ENCODE measurements at regions of chr6 and their contacts with region 1.

Region 1: GRCh38 chr6:31971993-31972708 is at the start of gene DXO:
- DNase-seq: peak; percentile 98
- H3K4me3 Mint-ChIP-seq: peak within 1 kb of the TSS; percentile 97
- H3K27ac Mint-ChIP-seq: peak within 1 kb of the TSS; percentile 99
- H3K4me1 Mint-ChIP-seq: peaks cover 45% of the 10 kb centered on the region
- H3K27me3 Mint-ChIP-seq: no peaks in the 10 kb centered on the region
- total RNA-seq, gene DXO: 16.7 to 17.5 TPM

Region 2: GRCh38 chr6:31862344-31863227 is 109.6 kb before region 1 on chr6 and contains the start of gene NEU1:
- CTCF ChIA-PET with region 1: interaction called, 10 read pairs
- POLR2A ChIA-PET with region 1: interaction called, 9 read pairs
- DNase-seq: peak; percentile 100
- H3K4me3 Mint-ChIP-seq: peak within 1 kb of the TSS; percentile 89
- H3K27ac Mint-ChIP-seq: peak within 1 kb of the TSS; percentile 66
- H3K4me1 Mint-ChIP-seq: peaks cover 23% of the 10 kb centered on the region
- H3K27me3 Mint-ChIP-seq: no peaks in the 10 kb centered on the region
- total RNA-seq, gene NEU1: 29.2 to 29.6 TPM

Region 3: GRCh38 chr6:31897612-31898382 is 74.4 kb before region 1 on chr6 and contains the start of gene EHMT2:
- CTCF ChIA-PET with region 1: interaction called, 3 read pairs
- POLR2A ChIA-PET with region 1: interaction called, 22 read pairs
- DNase-seq: peak; percentile 91
- H3K4me3 Mint-ChIP-seq: peak within 1 kb of the TSS; percentile 90
- H3K27ac Mint-ChIP-seq: peak within 1 kb of the TSS; percentile 84
- H3K4me1 Mint-ChIP-seq: peaks cover 49% of the 10 kb centered on the region
- H3K27me3 Mint-ChIP-seq: peaks cover 5% of the 10 kb centered on the region
- total RNA-seq, gene EHMT2: 57.0 to 58.4 TPM

Region 4: DNA sequence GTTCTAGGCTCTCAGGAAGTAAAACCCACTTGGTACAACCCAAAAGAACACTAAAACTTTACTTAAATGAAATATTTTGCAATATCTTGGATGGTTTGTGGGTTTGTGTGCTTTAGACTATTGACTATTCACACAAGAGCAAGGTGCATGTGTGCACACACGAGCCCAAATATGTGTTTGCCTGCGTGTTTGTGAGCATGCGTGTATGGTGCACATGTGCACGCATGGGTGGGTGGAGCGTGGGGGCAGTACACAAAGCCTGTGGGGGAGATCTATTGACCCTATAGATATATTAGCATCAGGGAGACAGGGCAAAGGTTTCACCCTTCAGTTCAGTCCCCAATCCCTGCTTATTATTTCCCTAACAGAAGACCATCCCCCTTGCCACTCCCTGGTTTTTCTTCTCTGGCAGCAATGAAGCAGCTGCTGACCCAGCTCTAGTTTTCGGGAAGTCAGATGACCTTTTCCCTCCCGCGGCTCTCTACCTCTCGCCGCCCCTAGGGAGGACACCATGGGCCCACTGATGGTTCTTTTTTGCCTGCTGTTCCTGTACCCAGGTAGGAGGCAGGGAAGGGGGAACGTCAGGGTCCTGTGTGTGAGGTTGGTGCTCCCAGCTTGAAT is 44.8 kb before region 1 on chr6 and contains the start of gene C2:
- CTCF ChIA-PET with region 1: no interaction called
- POLR2A ChIA-PET with region 1: no interaction called
- DNase-seq: no peak
- H3K4me3 Mint-ChIP-seq: no peak within 1 kb of the TSS
- H3K27ac Mint-ChIP-seq: no peak within 1 kb of the TSS
- H3K4me1 Mint-ChIP-seq: no peaks in the 10 kb centered on the region
- H3K27me3 Mint-ChIP-seq: peaks cover 3% of the 10 kb centered on the region
- total RNA-seq, gene C2: 0.45 to 1.0 TPM

Region 5: DNA sequence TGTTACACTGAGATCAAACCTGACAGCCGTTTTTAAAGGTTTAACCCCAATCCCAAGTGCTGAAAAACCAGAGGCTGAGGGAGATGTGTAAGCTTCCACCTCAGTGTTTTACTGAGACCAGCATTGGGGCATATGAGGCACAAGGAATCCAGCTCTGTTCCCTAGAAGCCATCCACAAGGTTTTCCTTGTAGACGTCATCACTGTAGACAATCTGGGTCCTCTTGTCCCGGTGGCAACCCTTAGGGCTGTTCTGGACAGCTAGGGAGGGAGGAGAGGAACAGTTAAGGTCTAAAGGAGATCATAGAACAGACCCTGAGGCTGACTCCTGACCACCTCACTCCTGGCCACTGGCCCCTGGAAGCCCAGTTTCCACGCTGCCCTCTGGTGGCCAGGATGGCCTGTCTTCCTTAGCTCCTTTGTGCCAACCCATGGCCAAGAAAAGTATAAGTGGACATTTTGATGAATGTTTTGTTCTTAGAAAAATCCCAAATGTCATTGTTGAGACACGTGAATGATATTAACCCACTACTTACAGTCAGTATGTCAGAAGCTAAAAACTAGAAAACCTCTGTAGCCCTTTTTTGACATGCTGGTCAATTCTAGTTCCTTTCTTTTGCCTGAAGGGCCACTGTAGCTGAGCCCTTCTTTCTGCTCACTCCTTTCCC is 19.9 kb before region 1 on chr6:
- CTCF ChIA-PET with region 1: interaction called, 11 read pairs
- POLR2A ChIA-PET with region 1: interaction called, 162 read pairs
- DNase-seq: peak; percentile 41
- H3K4me3 Mint-ChIP-seq: no peak overlapping the region
- H3K27ac Mint-ChIP-seq: no peak overlapping the region
- H3K4me1 Mint-ChIP-seq: peaks cover 2% of the 10 kb centered on the region
- H3K27me3 Mint-ChIP-seq: no peaks in the 10 kb centered on the region

Region 6: DNA sequence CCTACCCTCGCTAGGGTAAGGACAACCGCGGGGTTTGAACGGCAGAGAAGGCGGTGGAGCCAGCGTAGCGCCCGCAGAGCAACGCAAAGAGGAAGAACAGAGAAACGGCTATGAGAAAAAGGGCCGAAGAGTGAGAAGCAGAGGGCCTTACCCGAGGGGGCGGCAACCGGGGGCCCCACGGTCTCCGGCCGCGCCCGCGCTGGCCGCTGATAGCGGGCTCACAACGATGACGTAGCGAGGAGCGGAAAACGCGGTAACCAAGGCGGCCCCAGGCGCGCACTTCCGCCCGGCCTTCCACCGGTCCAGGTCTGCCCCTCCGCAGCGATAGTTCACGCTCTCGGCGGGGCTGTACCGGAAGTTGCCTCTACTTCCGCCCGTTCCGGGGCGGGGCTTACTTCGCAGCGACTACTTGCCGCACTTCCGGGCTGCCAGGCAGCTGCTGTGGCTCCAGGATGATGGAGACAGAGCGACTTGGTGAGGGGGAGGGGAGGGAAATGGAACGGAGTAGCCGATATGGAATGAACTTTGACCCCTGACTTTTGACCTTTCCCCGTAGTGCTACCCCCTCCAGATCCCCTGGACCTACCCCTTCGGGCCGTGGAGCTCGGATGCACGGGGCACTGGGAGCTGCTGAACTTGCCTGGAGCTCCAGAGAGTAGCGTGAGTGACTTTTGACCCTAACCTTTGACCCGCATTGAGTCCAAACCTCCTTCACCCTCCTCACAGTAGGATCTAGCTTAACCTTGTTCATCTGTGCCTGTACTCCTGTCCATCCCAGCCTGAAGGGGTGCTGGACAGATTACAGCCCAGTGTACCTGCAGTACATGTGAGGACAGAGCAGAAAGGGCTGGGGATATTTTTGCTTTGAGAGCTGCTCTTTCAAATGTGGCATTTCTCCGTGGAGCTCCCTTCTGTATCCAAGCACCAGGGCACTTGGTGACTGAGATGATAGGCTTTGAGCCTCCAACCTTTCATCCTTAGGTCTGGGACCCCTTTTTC is 13.1 kb before region 1 on chr6 and contains the starts of genes NELFE and SKIC2:
- CTCF ChIA-PET with region 1: interaction called, 13 read pairs
- POLR2A ChIA-PET with region 1: interaction called, 162 read pairs
- DNase-seq: peak; percentile 99
- H3K4me3 Mint-ChIP-seq: peak within 1 kb of the TSS; percentile 91
- H3K27ac Mint-ChIP-seq: peak within 1 kb of the TSS; percentile 96
- H3K4me1 Mint-ChIP-seq: peaks cover 45% of the 10 kb centered on the region
- H3K27me3 Mint-ChIP-seq: no peaks in the 10 kb centered on the region
- total RNA-seq, gene NELFE: 69.6 to 70.6 TPM
- total RNA-seq, gene SKIC2: 69.4 to 74.2 TPM

Region 7: GRCh38 chr6:32163559-32164258 is 191.6 kb after region 1 on chr6:
- CTCF ChIA-PET with region 1: no interaction called
- POLR2A ChIA-PET with region 1: no interaction called
- DNase-seq: no peak
- H3K4me3 Mint-ChIP-seq: no peak overlapping the region
- H3K27ac Mint-ChIP-seq: no peak overlapping the region
- H3K4me1 Mint-ChIP-seq: no peaks in the 10 kb centered on the region
- H3K27me3 Mint-ChIP-seq: no peaks in the 10 kb centered on the region

Measured in activated CD4-positive, alpha-beta memory T cell treated with anti-CD3 and anti-CD28 coated beads, Interleukin-2, amount 10 ng/mL, durations not matched to agents 7 days and 5 days (primary cell).